Activated CD4-positive, alpha-beta T cell treated with anti-CD3 and anti-CD28 coated beads, Interleukin-2, amount 10 ng/mL, durations not matched to agents 24 days and 14 days (primary cell): ENCODE measurements at regions of chr12 and their contacts with region 1.

Region 1: DNA sequence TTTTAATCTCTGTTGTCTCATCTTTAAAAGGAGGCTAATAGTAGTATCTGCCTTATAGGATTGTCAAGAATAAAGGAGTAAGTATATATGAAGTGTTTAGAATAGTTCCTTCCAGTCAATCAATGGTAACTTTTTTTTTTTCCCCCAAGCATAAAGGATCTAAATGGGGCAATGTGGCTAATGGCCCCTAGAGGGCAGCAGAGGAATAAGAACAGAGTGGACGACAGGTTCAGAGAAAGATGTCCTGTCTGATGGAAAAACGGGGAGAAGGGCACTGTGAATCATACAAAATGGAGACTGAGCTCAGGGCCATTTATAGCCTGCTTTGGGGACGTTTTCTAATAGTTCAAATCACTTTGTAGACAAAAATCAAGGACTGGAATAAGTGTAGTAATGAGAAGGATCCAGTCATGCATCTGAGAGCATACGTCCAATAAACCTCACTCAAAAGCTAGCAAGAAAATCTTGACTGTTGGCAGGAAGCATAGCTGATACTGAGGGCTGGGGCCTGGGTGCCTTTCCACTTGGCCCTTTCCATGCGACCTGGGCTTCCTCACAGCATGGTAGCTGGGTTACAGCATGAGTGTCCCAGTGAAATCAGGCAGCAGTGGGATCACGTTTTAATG is 51.3 kb downstream of the IFNG-AS1 start:
- DNase-seq: peak; percentile 89
- H3K4me3 Mint-ChIP-seq: no peak overlapping the region
- H3K27ac Mint-ChIP-seq: peak overlapping the region; percentile 78
- H3K4me1 Mint-ChIP-seq: peaks cover 42% of the 10 kb centered on the region
- H3K27me3 Mint-ChIP-seq: no peaks in the 10 kb centered on the region

Region 2: GRCh38 chr12:67355578-67356379 is 684.8 kb before region 1 on chr12:
- intact Hi-C with region 1: loop called (anchors 5 kb)
- DNase-seq: peak; percentile 71
- H3K4me3 Mint-ChIP-seq: no peak overlapping the region
- H3K27ac Mint-ChIP-seq: no peak overlapping the region
- H3K4me1 Mint-ChIP-seq: peaks cover 15% of the 10 kb centered on the region
- H3K27me3 Mint-ChIP-seq: no peaks in the 10 kb centered on the region

Region 3: DNA sequence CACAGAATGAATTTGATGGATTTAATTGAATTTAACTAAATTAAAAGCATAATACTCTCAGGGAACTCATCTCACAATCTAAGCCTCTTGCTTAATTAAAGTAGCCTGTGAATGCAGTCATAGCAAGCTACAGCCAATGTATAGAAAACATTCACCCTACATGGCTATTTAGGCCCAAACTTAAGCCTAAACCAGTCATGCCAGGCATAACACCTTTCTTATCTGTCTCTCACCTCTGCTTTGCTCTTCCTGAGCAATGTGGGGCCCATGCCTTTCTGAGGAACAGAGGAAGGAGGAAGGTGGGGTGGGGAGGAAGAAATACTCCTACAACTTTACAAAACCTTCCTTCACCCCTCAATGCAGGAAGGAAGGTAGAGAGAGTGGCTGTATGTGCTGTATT is 22.2 kb before region 1 on chr12:
- intact Hi-C with region 1: loop called (anchors 2 kb)
- DNase-seq: no peak
- H3K4me3 Mint-ChIP-seq: no peak overlapping the region
- H3K27ac Mint-ChIP-seq: peak overlapping the region; percentile 30
- H3K4me1 Mint-ChIP-seq: peaks cover 4% of the 10 kb centered on the region
- H3K27me3 Mint-ChIP-seq: no peaks in the 10 kb centered on the region

Region 4: DNA sequence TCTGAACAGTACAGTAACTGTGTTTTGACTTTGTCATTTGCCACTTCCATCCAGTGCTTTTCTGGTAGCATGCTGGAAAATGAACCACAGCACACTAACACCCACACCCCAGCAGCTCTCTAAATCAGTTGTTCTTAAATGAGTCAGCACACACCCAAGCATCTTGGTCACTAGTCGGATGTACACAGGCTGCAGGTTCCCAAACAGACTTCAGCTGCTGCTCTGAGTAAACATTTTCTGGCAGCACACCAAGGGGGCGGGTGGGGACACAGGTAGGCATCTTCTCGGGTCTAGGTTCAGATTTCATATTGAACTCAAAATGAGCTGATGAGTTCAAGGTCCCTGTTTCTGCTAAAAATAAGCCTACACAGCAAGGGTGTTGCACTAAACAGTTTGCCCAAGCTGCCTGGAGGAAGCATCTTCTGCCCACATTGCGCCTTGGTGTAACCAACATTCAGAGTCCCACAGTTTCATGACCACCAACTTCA is 79.2 kb after region 1 on chr12:
- intact Hi-C with region 1: loop called (anchors 1 kb)
- DNase-seq: peak; percentile 88
- H3K4me3 Mint-ChIP-seq: peak overlapping the region; percentile 39
- H3K27ac Mint-ChIP-seq: no peak overlapping the region
- H3K4me1 Mint-ChIP-seq: peaks cover 35% of the 10 kb centered on the region
- H3K27me3 Mint-ChIP-seq: no peaks in the 10 kb centered on the region

Region 5: GRCh38 chr12:68158432-68158831 is 117.9 kb after region 1 on chr12:
- intact Hi-C with region 1: loop called (anchors 1 kb)
- DNase-seq: peak; percentile 81
- H3K4me3 Mint-ChIP-seq: peak overlapping the region; percentile 61
- H3K27ac Mint-ChIP-seq: peak overlapping the region; percentile 77
- H3K4me1 Mint-ChIP-seq: peaks cover 32% of the 10 kb centered on the region
- H3K27me3 Mint-ChIP-seq: no peaks in the 10 kb centered on the region

Region 6: DNA sequence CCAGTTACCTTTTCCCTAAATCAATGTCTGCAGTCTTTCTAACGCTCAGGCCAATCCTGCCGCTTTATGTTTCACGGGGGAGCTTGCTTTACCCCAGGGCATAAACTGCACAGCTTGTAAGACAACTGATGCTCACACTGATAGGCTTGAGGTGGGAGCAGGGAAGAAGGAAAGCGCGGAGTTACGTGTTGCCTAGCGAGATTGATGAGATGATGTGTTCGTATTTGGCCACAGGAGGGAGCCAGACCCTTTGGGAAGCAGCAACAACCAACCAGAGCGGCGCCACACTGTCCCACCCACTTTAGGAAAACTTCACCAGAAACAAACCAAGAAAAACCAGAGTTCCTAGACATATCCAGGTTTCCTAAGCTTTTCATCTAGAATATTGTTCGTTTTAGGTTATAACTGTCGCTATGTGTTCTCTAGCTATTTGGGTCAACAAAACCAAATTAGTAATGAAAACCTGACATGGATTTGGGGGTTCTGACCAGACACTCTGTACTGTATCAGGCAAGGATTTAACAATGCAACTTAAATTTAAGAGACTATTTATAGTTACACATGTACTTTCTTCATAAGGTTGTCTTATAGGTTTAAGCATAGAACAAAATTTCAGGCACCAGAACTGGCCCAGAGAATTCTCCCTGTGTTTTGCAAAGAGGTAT is 182.7 kb after region 1 on chr12:
- intact Hi-C with region 1: loop called (anchors 1 kb)
- DNase-seq: peak; percentile 91
- H3K4me3 Mint-ChIP-seq: peak overlapping the region; percentile 75
- H3K27ac Mint-ChIP-seq: peak overlapping the region; percentile 81
- H3K4me1 Mint-ChIP-seq: peaks cover 17% of the 10 kb centered on the region
- H3K27me3 Mint-ChIP-seq: peaks cover 14% of the 10 kb centered on the region

Region 7: GRCh38 chr12:68331869-68332727 is 291.5 kb after region 1 on chr12 and contains the start of gene MDM1:
- intact Hi-C with region 1: loop called (anchors 5 kb)
- DNase-seq: peak; percentile 98
- H3K4me3 Mint-ChIP-seq: peak within 1 kb of the TSS; percentile 88
- H3K27ac Mint-ChIP-seq: peak within 1 kb of the TSS; percentile 81
- H3K4me1 Mint-ChIP-seq: peaks cover 37% of the 10 kb centered on the region
- H3K27me3 Mint-ChIP-seq: peaks cover 9% of the 10 kb centered on the region
- total RNA-seq, gene MDM1: 23.2 and 24.9 TPM in 2 replicates